Left lung (tissue), 14 donors: ENCODE measurements at regions of chr3 and their contacts with region 1.

Region 1: GRCh38 chr3:157493627-157494550 is 9.3 kb downstream of the VEPH1 start:
- DNase-seq: peak in 2 of 4 donors; percentile 62 to 71
- ATAC-seq: peak; percentile 42
- H3K4me3 ChIP-seq: no peak overlapping the region
- H3K27ac ChIP-seq: no peak overlapping the region
- H3K4me1 ChIP-seq: peaks cover 0 to 17% of the 10 kb centered on the region in 2 donors
- H3K27me3 ChIP-seq: peaks cover 0 to 1% of the 10 kb centered on the region in 2 donors
- CTCF ChIP-seq: peak; percentile 35 to 48

Region 2: GRCh38 chr3:157201648-157202278 is 292.1 kb before region 1 on chr3:
- intact Hi-C with region 1: loop called in 1 of 2 experiments (anchors 10 kb)
- DNase-seq: peak in 2 of 4 donors; percentile 14 to 30
- ATAC-seq: peak; percentile 79
- H3K4me3 ChIP-seq: no peak overlapping the region
- H3K27ac ChIP-seq: no peak overlapping the region
- H3K4me1 ChIP-seq: peaks cover 5% of the 10 kb centered on the region in 2 donors
- H3K27me3 ChIP-seq: no peaks in the 10 kb centered on the region
- CTCF ChIP-seq: peak; percentile 41 to 57